HepG2 (cell line): ENCODE measurements at regions of chr19 and their contacts with region 1.

Region 1: DNA sequence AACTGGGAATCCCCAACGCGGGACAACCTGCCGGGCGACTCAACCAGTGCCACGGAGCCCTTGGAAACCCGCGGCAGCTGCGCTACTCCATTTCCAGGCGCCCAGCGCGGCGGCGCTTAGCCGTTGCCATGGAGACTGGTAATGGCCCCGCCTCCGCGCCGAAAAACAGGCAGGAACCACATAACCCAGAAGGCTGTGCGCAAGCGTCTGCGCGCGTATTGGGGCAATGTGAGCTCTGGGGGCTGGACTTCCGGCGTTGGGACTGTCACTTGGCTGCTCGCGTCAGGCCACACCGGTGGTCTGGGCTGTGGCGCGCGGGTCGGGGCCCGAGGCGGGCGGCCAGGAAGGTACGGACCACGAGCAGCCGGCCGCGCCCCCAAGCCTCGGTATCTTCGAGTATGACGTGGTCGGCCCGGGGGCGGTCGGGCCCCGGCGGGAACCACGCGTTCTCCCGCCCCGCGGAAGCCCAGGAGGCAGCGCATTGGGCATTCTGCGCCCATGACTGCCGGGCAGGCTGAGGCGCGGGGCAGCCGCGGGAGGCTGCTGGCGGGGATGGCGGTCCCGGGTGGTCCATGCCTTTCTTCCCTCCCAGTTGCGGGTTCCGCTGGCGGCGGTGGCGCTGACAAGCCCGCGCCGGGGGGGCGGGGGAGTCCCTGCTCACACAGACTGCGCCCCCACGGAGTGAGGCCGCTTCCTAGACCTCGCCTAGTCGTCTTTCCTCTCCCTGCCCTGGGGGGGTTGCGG is at the start of gene ZNF324B:
- DNase-seq: peak; percentile 94
- ATAC-seq: peak; percentile 98
- H3K4me3 ChIP-seq: peak within 1 kb of the TSS; percentile 68 to 92 (median 83)
- H3K27ac ChIP-seq: no peak within 1 kb of the TSS
- H3K4me1 ChIP-seq: peaks cover 7% of the 10 kb centered on the region
- H3K27me3 ChIP-seq: no peaks in the 10 kb centered on the region
- CTCF ChIP-seq: peak; percentile 14; the same call in 1 of the 2 replicates
- EP300 ChIP-seq: no peak
- POLR2A ChIP-seq: peak in 1 of 2 experiments; percentile 76; a peak in 2 of 4 replicates
- RAD21 ChIP-seq: no peak
- total RNA-seq, gene ZNF324B: 2.5 and 3.0 TPM in 2 replicates

Region 2: DNA sequence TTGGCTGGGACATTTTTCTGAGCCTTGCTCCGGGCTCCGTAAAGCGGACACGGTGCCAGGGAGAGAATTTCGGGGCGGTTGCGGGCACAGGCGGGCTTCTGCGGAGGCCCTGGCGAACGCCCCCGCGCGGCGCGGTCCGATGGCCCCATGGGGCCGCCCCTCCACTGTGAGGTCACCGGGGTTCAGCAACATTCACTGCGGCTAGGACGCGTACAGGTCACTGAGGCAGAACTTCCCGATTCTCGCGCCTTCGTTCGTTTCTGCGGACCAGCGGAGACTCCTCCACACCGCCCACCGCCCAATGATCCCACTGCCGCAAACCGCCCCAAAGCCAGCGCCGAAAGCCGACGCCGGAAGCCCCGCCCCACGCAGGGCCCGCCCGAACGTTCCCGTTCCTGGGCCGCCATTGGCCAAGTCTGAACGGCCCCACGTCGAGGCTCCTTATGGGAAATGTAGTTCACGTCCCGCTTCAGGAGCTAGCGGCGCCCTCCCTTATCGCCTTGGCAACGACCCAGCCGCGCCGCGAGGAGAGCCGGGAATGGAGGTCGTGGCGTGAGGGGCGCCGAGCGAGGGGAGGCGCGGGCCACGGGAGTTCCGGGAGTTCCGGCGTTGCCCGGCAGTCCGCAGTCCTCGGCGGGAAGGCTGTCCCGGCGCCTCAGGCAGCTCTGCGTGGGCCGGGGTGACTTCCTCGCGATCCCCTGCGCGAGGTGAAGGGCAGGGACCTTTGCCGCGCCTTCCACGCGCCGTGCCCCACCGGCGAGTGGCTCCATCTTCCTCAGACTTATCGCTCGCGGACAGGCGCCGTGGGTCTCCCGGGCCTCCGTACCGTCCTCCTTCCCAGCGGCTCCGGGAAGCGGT is 43.1 kb before region 1 on chr19 and contains the start of gene ZNF584:
- CTCF ChIA-PET with region 1: no interaction called
- POLR2A ChIA-PET with region 1: interaction called, 4 read pairs
- in situ Hi-C with region 1: no loop called
- intact Hi-C with region 1: loop called (anchors 5 kb)
- DNase-seq: peak; percentile 89
- ATAC-seq: peak; percentile 90
- H3K4me3 ChIP-seq: peak within 1 kb of the TSS; percentile 89 to 98 (median 95)
- H3K27ac ChIP-seq: peak within 1 kb of the TSS; percentile 85
- H3K4me1 ChIP-seq: peaks cover 32% of the 10 kb centered on the region
- H3K27me3 ChIP-seq: no peaks in the 10 kb centered on the region; a peak in 1 of 5 replicates
- CTCF ChIP-seq: peak; percentile 47
- EP300 ChIP-seq: no peak
- POLR2A ChIP-seq: peak; percentile 89 to 96
- RAD21 ChIP-seq: peak; percentile 36; the same call in 1 of the 2 replicates
- total RNA-seq, gene ZNF584: 6.8 and 7.0 TPM in 2 replicates

Region 3: DNA sequence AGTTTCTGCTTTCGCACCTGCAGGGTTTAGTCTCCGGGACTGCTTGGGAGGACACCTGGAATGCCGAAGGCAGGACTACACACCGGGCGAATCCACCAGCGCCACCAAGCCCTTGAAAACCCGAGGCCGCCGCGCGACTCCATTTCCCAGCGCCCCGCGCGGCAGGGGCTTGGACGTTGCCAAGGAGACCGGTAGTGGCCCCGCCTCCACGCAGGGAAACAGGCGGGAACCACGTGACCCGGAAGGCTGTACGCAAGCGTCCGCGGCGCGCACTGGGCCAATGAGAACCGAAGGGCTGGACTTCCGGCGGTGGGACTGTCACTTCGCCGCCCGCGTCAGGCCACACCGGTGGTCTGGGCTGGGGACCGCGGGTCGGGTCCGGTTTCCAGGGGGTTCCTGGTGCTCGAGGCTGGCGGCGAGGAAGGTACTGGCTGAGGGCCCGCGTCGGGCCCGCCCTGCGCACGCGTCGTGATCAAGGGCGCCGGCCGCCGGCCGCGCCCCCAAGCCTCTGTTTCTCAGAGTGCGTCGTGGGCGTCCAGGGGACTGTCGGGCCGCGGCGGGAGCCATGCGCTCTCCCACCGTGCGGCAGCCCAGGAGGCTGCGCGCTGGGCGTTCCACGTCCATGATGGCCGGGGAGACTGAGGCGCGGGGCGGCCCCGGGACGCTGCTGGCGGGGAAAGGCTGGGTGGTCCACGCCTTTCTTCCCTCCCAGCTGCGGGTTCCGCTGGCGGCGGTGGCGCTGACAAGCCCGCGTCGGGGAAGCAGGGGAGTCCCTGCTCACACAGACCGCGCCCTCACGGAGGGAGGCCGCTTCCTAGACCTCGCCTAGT is 15.4 kb after region 1 on chr19 and contains the start of gene ZNF324:
- CTCF ChIA-PET with region 1: no interaction called
- POLR2A ChIA-PET with region 1: no interaction called
- in situ Hi-C with region 1: no loop called
- intact Hi-C with region 1: loop called (anchors 2 kb)
- DNase-seq: peak; percentile 94
- ATAC-seq: peak; percentile 89
- H3K4me3 ChIP-seq: peak within 1 kb of the TSS; percentile 71 to 93 (median 86)
- H3K27ac ChIP-seq: peak within 1 kb of the TSS; percentile 51
- H3K4me1 ChIP-seq: peaks cover 24% of the 10 kb centered on the region
- H3K27me3 ChIP-seq: no peaks in the 10 kb centered on the region
- CTCF ChIP-seq: peak; percentile 62
- EP300 ChIP-seq: no peak
- POLR2A ChIP-seq: peak; percentile 64 to 74
- RAD21 ChIP-seq: no peak
- total RNA-seq, gene ZNF324: 4.0 and 4.7 TPM in 2 replicates

Region 4: GRCh38 chr19:58477130-58477529 is 25.6 kb after region 1 on chr19:
- CTCF ChIA-PET with region 1: no interaction called
- POLR2A ChIA-PET with region 1: no interaction called
- in situ Hi-C with region 1: no loop called
- intact Hi-C with region 1: no loop called
- DNase-seq: no peak
- ATAC-seq: no peak
- H3K4me3 ChIP-seq: peak overlapping the region in 2 of 3 experiments; percentile 75 to 88; a peak in 4 of 6 replicates
- H3K27ac ChIP-seq: peak overlapping the region; percentile 77
- H3K4me1 ChIP-seq: peaks cover 20% of the 10 kb centered on the region
- H3K27me3 ChIP-seq: no peaks in the 10 kb centered on the region; a peak in 1 of 5 replicates
- CTCF ChIP-seq: no peak
- EP300 ChIP-seq: no peak
- POLR2A ChIP-seq: no peak
- RAD21 ChIP-seq: no peak